AG04449 (cell line): ENCODE measurements at regions of chr3 and their contacts with region 1.

Region 1: GRCh38 chr3:138923531-138923994 is 23.4 kb downstream of the FOXL2 start:
- DNase-seq: no peak
- H3K4me3 ChIP-seq: no peak overlapping the region
- CTCF ChIP-seq: peak; percentile 85

Region 2: DNA sequence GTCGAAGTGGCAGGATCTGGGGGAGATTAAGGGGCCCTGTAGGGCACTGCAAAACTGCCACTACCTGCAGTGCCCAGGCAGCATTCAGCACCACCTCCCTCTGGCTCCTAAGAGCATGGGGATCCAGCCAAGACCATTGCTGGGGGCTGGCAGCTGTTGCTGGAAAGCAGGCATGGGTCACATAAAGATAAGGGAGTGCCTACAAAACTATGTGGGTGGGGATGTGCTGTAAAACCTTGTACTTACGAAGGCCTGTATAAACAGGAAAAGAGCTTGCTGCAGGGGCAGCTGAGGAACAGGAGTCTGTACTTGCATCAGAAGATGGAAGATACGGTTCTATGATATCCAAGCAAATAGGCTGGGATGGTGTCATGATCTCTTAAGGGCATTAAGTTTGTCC is 1938.7 kb before region 1 on chr3:
- CTCF ChIA-PET with region 1: no interaction called
- POLR2A ChIA-PET with region 1: no interaction called
- DNase-seq: peak; percentile 31
- H3K4me3 ChIP-seq: no peak overlapping the region
- CTCF ChIP-seq: no peak

Region 3: GRCh38 chr3:138329127-138329983 is 594.2 kb before region 1 on chr3 and contains the start of gene NME9:
- CTCF ChIA-PET with region 1: interaction called, 18 read pairs
- POLR2A ChIA-PET with region 1: no interaction called
- DNase-seq: no peak
- H3K4me3 ChIP-seq: peak within 1 kb of the TSS; percentile 62
- CTCF ChIP-seq: peak; percentile 74

Region 4: DNA sequence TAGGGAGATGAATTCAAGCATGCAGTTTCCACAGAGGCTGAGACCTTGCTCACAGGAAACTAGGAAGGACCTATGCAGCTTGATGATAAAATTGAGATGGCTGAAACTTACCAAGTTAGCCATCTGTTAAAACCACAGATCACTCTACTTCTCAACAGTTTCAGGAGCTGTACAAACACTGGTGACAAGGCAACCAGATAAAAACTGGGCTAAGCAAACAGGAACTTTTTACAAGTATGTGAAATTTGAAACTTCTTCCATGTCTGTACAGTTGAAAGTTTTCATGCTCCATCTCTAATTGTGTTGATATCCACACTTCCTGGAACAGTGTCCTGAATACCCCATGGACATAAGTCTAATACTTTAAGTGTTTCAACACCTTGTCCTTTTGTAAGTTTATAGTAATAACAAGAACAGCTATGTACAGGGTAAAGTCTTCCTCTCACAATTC is 236.8 kb before region 1 on chr3:
- CTCF ChIA-PET with region 1: interaction called, 11 read pairs
- POLR2A ChIA-PET with region 1: no interaction called
- DNase-seq: peak; percentile 85
- H3K4me3 ChIP-seq: no peak overlapping the region
- CTCF ChIP-seq: no peak

Region 5: DNA sequence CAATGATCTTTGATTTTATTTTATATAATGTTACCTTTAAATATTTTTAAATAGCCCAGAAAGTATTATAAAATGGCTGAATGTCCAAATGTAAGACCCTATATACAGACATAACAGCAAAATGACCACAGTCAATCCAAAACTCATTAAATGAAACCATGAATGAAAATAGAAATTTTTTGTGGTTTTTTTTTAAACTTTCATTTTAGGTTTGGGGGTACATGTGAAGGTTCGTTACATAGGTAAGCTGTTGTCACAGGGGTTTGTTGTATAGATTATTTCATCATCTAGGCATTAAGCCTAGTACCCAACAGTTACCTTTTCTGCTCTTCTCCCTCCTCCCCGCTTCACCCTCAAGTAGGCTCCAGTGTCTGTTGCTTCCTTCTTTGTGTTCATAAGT is 206.2 kb before region 1 on chr3:
- CTCF ChIA-PET with region 1: interaction called, 11 read pairs
- POLR2A ChIA-PET with region 1: no interaction called
- DNase-seq: no peak
- H3K4me3 ChIP-seq: no peak overlapping the region
- CTCF ChIP-seq: no peak

Region 6: DNA sequence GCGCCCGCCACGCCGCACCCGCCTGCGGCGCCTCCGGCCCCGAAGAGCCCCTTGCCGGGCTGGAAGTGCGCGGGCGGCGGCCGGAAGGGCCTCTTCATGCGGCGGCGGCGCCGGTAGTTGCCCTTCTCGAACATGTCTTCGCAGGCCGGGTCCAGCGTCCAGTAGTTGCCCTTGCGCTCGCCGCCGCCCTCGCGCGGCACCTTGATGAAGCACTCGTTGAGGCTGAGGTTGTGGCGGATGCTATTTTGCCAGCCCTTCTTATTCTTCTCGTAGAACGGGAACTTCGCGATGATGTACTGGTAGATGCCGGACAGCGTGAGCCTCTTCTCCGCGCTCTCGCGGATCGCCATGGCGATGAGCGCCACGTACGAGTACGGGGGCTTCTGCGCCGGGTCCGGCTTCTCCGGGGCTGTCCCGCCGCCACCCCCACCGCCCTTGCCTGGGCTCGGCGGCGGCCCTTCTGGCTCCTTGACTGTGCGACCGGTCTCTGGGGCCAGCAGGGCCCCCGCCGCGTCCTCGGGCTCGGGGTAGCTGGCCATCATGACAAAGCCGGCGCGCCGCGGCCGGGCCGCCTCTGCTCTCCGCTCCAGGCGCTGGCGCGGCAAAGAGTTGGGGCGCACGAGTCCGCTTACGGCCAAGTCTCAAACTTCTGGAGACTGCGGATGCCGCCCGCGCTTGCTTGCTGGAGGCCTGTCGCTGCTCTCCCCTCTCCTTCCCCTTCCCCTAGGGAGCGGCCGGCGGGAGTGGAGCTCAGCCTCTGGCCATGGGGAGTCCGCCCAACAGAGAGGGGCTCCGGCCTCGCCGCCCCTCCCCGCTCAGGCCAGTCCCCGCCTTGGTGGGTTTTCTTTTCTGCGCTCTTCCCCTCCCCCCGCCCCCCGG is 22.9 kb after region 1 on chr3:
- CTCF ChIA-PET with region 1: interaction called, 14 read pairs
- POLR2A ChIA-PET with region 1: no interaction called
- DNase-seq: no peak
- H3K4me3 ChIP-seq: peak overlapping the region; percentile 64
- CTCF ChIP-seq: peak; percentile 51

Region 7: GRCh38 chr3:139032326-139033002 is 108.9 kb after region 1 on chr3:
- CTCF ChIA-PET with region 1: no interaction called
- POLR2A ChIA-PET with region 1: no interaction called
- DNase-seq: no peak
- H3K4me3 ChIP-seq: no peak overlapping the region
- CTCF ChIP-seq: no peak